ENCODE measurements at regions of chr11 and their contacts with region 1.

Region 1: GRCh38 chr11:12182676-12183541 is 72.5 kb downstream of the MICAL2 start:
- DNase-seq: peak; percentile 89
- H3K4me3 ChIP-seq: no peak overlapping the region
- H3K27ac ChIP-seq: peak overlapping the region; percentile 99
- H3K4me1 ChIP-seq: peaks cover 54% of the 10 kb centered on the region
- H3K27me3 ChIP-seq: no peaks in the 10 kb centered on the region
- CTCF ChIP-seq: no peak
- POLR2A ChIP-seq: no peak

Region 2: GRCh38 chr11:12110201-12110713 is 72.7 kb before region 1 on chr11 and contains the start of gene MICAL2:
- CTCF ChIA-PET with region 1: no interaction called
- POLR2A ChIA-PET with region 1: no interaction called
- dilution Hi-C with region 1: no loop called
- intact Hi-C with region 1: loop called (anchors 1 kb)
- DNase-seq: peak; percentile 87
- H3K4me3 ChIP-seq: peak within 1 kb of the TSS; percentile 50 to 86 (median 73)
- H3K27ac ChIP-seq: peak within 1 kb of the TSS; percentile 56
- H3K4me1 ChIP-seq: peaks cover 40% of the 10 kb centered on the region
- H3K27me3 ChIP-seq: no peaks in the 10 kb centered on the region
- CTCF ChIP-seq: no peak
- POLR2A ChIP-seq: peak; percentile 85
- total RNA-seq, gene MICAL2: 200 and 222 TPM in 2 replicates

Region 3: DNA sequence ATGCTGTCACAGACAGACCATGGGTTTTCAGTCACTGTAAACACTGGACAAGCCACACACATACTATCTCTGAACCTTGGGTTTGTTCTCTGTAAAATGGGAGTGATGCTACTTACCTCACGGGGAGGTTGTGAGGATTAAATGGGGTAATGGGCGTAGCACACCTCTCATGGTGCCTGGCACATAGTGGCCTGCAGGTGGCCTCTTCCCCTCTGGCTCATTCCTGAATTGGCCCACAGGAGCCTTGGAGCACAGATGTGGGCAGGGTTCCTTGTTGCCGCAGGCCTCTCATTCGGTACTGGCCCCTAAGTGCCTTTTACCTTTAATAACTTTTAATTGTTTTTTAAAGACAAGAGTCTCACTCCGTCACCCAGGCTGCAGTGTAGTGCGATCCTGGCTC is 60.8 kb before region 1 on chr11:
- CTCF ChIA-PET with region 1: interaction called, 7 read pairs
- POLR2A ChIA-PET with region 1: interaction called, 3 read pairs
- dilution Hi-C with region 1: no loop called
- intact Hi-C with region 1: loop called (anchors 2 kb)
- DNase-seq: no peak
- H3K4me3 ChIP-seq: no peak overlapping the region
- H3K27ac ChIP-seq: no peak overlapping the region
- H3K4me1 ChIP-seq: peaks cover 38% of the 10 kb centered on the region
- H3K27me3 ChIP-seq: no peaks in the 10 kb centered on the region
- CTCF ChIP-seq: peak; percentile 43 to 56
- POLR2A ChIP-seq: no peak

Region 4: DNA sequence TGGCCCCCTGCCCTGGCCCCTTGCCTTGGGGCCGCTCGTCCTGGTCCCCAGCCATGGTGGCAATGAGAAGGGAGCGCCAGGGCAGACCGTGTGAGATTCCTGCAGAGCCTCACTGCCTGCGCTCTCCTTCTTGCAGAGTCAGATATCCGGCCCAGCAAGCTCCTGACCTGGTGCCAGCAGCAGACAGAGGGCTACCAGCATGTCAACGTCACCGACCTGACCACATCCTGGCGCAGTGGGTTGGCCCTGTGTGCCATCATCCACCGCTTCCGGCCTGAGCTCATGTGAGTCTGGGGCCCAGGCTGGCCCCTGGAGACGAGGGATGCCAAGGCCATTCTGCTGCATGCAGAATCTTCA is 41.6 kb after region 1 on chr11:
- CTCF ChIA-PET with region 1: interaction called, 7 read pairs
- POLR2A ChIA-PET with region 1: interaction called, 5 read pairs
- dilution Hi-C with region 1: no loop called
- intact Hi-C with region 1: loop called (anchors 1 kb)
- DNase-seq: peak; percentile 28
- H3K4me3 ChIP-seq: no peak overlapping the region
- H3K27ac ChIP-seq: peak overlapping the region; percentile 65
- H3K4me1 ChIP-seq: peaks cover 35% of the 10 kb centered on the region
- H3K27me3 ChIP-seq: no peaks in the 10 kb centered on the region
- CTCF ChIP-seq: no peak
- POLR2A ChIP-seq: no peak

Region 5: DNA sequence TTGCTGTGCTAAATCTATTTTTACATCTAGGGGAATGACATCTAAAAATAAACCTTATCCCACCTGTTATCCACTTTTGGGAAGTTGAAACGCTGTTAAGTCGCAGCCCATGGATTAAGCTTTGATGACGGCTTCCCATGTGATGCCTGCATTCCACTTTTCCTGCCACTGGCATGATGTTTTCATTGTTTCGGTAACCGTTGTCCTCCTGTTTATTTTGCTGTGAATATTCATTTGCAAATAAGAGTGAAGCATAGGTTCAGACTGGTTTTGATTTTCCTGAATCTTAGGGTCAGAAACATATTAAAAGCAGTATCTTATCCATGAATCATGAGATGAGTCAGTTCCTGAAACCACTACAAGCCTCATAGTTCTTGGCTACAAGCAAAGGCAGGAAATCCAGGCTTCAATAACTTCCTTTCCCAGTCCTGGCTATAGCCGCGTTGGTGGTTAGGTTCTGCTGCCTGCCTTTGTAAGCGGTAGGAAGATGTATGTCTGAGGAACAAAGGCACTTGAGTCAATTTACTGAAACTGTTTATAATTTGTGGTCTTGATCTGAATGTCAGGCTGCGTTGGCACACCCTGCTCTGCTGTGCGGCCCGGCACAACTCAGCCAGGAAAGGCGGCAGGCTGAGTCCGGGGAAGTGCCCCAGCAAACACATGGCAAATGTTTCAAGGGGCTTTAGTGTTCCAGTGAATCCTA is 510.7 kb after region 1 on chr11:
- CTCF ChIA-PET with region 1: no interaction called
- POLR2A ChIA-PET with region 1: no interaction called
- dilution Hi-C with region 1: no loop called
- intact Hi-C with region 1: no loop called
- DNase-seq: peak; percentile 99
- H3K4me3 ChIP-seq: peak overlapping the region in 1 of 3 experiments; percentile 28
- H3K27ac ChIP-seq: peak overlapping the region; percentile 95
- H3K4me1 ChIP-seq: peaks cover 54% of the 10 kb centered on the region
- H3K27me3 ChIP-seq: no peaks in the 10 kb centered on the region
- CTCF ChIP-seq: no peak
- POLR2A ChIP-seq: peak; percentile 28

Region 6: DNA sequence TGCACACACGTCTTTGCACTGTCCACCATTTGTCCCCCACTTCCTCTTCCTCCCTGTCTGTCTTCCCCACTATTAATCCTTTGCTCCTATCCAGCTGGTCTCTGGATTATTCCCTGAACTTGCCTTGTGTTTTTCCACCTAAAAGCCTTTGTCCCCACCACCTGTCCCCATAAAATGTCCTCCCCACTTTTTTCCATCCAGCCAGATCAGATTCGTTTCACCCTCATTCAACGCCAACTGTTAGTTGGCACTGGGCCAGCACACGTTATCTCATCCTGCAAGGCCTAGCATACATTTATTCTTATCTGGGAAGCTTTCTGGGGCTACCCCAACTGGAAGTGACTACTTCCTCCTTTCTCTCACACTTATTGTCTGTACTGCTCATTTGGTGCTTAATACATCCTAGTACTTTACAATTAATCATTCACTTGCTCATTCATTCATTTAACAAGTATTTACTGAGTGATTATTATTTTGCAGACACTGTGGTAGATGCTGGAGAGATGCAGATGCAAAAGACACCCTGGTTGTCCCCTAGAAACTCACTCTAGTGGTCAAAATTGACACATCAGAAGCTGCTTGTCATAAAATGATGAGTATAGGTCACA is 922.4 kb after region 1 on chr11:
- CTCF ChIA-PET with region 1: no interaction called
- POLR2A ChIA-PET with region 1: no interaction called
- dilution Hi-C with region 1: no loop called
- intact Hi-C with region 1: no loop called
- DNase-seq: peak; percentile 99
- H3K4me3 ChIP-seq: peak overlapping the region in 1 of 3 experiments; percentile 0
- H3K27ac ChIP-seq: peak overlapping the region; percentile 60
- H3K4me1 ChIP-seq: peaks cover 39% of the 10 kb centered on the region
- H3K27me3 ChIP-seq: no peaks in the 10 kb centered on the region
- CTCF ChIP-seq: no peak
- POLR2A ChIP-seq: peak; percentile 70